ENCODE measurements at regions of chr1 and their contacts with region 1.

Region 1: GRCh38 chr1:36463803-36464604 is at the start of gene MRPS15:
- DNase-seq: peak; percentile 88 to 97 (median 94)
- ATAC-seq: peak; percentile 98
- H3K4me3 ChIP-seq: peak within 1 kb of the TSS; percentile 90 to 92
- H3K4me3 Mint-ChIP-seq: peak within 1 kb of the TSS; percentile 91
- H3K27ac ChIP-seq: peak within 1 kb of the TSS; percentile 82 to 90
- H3K27ac Mint-ChIP-seq: peak within 1 kb of the TSS; percentile 96
- H3K4me1 ChIP-seq: peaks cover 12% of the 10 kb centered on the region
- H3K4me1 Mint-ChIP-seq: peaks cover 29% of the 10 kb centered on the region
- H3K27me3 ChIP-seq: no peaks in the 10 kb centered on the region
- H3K27me3 Mint-ChIP-seq: no peaks in the 10 kb centered on the region
- CTCF ChIP-seq: no peak
- total RNA-seq, gene MRPS15: 37.9 to 45.4 TPM

Region 2: GRCh38 chr1:35641233-35641866 is 822.7 kb before region 1 on chr1 and contains the start of gene PSMB2:
- CTCF ChIA-PET with region 1: no interaction called
- POLR2A ChIA-PET with region 1: no interaction called
- intact Hi-C with region 1: loop called in 1 of 2 experiments (anchors 5 kb)
- DNase-seq: peak; percentile 91 to 99 (median 97)
- ATAC-seq: peak; percentile 94
- H3K4me3 ChIP-seq: peak within 1 kb of the TSS; percentile 94 to 97
- H3K4me3 Mint-ChIP-seq: peak within 1 kb of the TSS; percentile 100
- H3K27ac ChIP-seq: peak within 1 kb of the TSS; percentile 89 to 93
- H3K27ac Mint-ChIP-seq: peak within 1 kb of the TSS; percentile 97
- H3K4me1 ChIP-seq: peaks cover 33% of the 10 kb centered on the region
- H3K4me1 Mint-ChIP-seq: peaks cover 37% of the 10 kb centered on the region
- H3K27me3 ChIP-seq: peaks cover 0 to 8% of the 10 kb centered on the region in 2 experiments
- H3K27me3 Mint-ChIP-seq: peaks cover 16% of the 10 kb centered on the region
- CTCF ChIP-seq: no peak
- total RNA-seq, gene PSMB2: 36.8 to 38.8 TPM

Region 3: GRCh38 chr1:35930593-35931445 is 533.2 kb before region 1 on chr1 and contains the start of gene AGO3:
- CTCF ChIA-PET with region 1: no interaction called
- POLR2A ChIA-PET with region 1: no interaction called
- intact Hi-C with region 1: loop called in 1 of 2 experiments (anchors 1 kb)
- DNase-seq: peak; percentile 70 to 97 (median 84)
- ATAC-seq: peak; percentile 79
- H3K4me3 ChIP-seq: peak within 1 kb of the TSS; percentile 66 to 93
- H3K4me3 Mint-ChIP-seq: peak within 1 kb of the TSS; percentile 94
- H3K27ac ChIP-seq: peak within 1 kb of the TSS; percentile 96
- H3K27ac Mint-ChIP-seq: peak within 1 kb of the TSS; percentile 98
- H3K4me1 ChIP-seq: peaks cover 28% of the 10 kb centered on the region
- H3K4me1 Mint-ChIP-seq: peaks cover 35% of the 10 kb centered on the region
- H3K27me3 ChIP-seq: no peaks in the 10 kb centered on the region
- H3K27me3 Mint-ChIP-seq: no peaks in the 10 kb centered on the region
- CTCF ChIP-seq: no peak
- total RNA-seq, gene AGO3: 27.6 to 30.2 TPM

Region 4: DNA sequence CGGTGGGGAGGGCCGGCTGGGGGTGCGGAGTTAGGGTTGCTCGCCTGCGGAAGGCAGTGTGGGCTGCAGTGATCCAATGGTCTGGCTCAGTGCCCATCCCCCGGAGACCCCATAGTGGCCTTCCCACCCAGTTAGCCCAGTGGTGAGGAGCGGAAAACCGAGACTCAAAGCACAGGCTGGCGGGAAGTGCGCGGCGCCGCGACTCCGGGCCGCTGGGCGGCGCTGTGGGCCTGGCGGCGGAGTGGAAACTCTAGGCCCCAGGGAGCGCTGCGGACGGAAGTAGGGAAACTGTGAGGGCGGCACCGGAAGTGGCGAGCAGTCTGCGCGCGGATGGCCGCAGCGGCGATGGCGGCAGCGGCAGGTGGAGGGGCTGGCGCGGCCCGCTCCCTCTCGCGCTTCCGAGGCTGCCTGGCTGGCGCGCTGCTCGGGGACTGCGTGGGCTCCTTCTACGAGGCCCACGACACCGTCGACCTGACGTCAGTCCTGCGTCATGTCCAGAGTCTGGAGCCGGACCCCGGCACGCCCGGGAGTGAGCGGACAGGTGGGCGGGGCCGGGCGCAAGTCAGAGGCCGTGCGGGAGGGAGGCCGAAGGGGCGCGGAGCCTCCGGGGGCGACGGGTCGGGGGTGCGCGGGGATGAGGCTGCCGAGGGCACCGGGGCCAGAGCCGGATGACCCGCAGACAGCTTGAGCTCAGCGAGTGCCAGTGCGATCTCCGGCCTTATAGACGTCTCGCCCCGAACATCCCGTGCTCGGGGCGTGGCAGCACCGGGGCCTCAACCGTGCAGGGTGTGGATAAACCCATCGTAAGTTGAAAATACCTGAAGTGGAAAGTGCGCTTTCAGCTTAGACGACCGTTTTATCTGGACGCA is 375.2 kb before region 1 on chr1 and contains the start of gene ADPRS:
- CTCF ChIA-PET with region 1: no interaction called
- POLR2A ChIA-PET with region 1: no interaction called
- intact Hi-C with region 1: loop called in 1 of 2 experiments (anchors 2 kb)
- DNase-seq: peak; percentile 81 to 96 (median 91)
- ATAC-seq: peak; percentile 89
- H3K4me3 ChIP-seq: peak within 1 kb of the TSS; percentile 89 to 98
- H3K4me3 Mint-ChIP-seq: peak within 1 kb of the TSS; percentile 90
- H3K27ac ChIP-seq: peak within 1 kb of the TSS; percentile 84 to 95
- H3K27ac Mint-ChIP-seq: peak within 1 kb of the TSS; percentile 94
- H3K4me1 ChIP-seq: peaks cover 24% of the 10 kb centered on the region
- H3K4me1 Mint-ChIP-seq: peaks cover 25% of the 10 kb centered on the region
- H3K27me3 ChIP-seq: peaks cover 5 to 6% of the 10 kb centered on the region in 2 experiments
- H3K27me3 Mint-ChIP-seq: peaks cover 15% of the 10 kb centered on the region
- CTCF ChIP-seq: peak; percentile 98
- total RNA-seq, gene ADPRS: 26.2 to 26.7 TPM

Region 5: DNA sequence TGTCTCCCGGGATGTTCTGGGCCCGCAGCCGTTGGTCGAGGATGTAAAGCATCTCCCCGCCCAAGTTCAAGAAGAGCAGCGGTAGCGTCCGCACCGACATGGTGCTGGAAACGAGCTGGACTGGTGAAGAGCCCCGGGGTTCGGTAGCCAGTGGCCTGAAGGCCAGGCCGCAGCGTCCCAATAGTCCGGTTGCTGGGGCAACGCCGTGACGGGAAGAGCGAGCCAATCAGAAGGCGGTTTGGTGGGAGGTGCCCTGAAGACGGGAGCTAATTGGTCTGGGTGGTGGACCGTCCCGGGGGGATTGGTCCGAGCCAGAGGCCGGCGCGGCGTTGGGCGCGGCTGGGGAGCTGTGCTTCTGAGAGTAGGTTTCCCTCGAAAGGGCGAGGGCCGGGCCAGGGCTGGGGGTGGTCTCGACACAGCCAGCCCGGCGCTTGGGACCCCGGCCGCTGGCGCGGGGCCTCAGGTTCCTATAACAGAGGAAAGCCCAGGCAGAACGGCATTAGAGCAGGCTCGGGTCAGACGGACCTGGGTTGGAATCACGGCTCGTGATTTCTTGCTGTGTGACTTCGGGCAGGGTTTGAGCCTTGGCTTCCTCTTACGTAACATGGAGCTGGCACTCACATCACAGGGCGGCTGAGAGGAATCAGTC is 13.6 kb before region 1 on chr1 and contains the start of gene OSCP1:
- CTCF ChIA-PET with region 1: interaction called, 3 read pairs
- POLR2A ChIA-PET with region 1: interaction called, 10 read pairs
- intact Hi-C with region 1: loop called (anchors 1 kb)
- DNase-seq: peak; percentile 74 to 94 (median 84)
- ATAC-seq: peak; percentile 97
- H3K4me3 ChIP-seq: peak within 1 kb of the TSS; percentile 74 to 76
- H3K4me3 Mint-ChIP-seq: peak within 1 kb of the TSS; percentile 95
- H3K27ac ChIP-seq: peak within 1 kb of the TSS; percentile 83 to 90
- H3K27ac Mint-ChIP-seq: peak within 1 kb of the TSS; percentile 98
- H3K4me1 ChIP-seq: peaks cover 5% of the 10 kb centered on the region
- H3K4me1 Mint-ChIP-seq: peaks cover 17% of the 10 kb centered on the region
- H3K27me3 ChIP-seq: no peaks in the 10 kb centered on the region
- H3K27me3 Mint-ChIP-seq: no peaks in the 10 kb centered on the region
- CTCF ChIP-seq: no peak
- total RNA-seq, gene OSCP1: 1.8 to 2.0 TPM

Measured in CD8-positive, alpha-beta T cell (primary cell).